Calu3 (cell line): ENCODE measurements at regions of chr12 and their contacts with region 1.

Region 1: GRCh38 chr12:6062757-6063735 is 61.4 kb downstream of the VWF start:
- DNase-seq: peak; percentile 76
- H3K4me3 Mint-ChIP-seq: no peak overlapping the region
- H3K27ac Mint-ChIP-seq: no peak overlapping the region
- H3K4me1 Mint-ChIP-seq: peaks cover 13% of the 10 kb centered on the region
- H3K27me3 Mint-ChIP-seq: peaks cover 21% of the 10 kb centered on the region
- CTCF ChIP-seq: peak; percentile 94

Region 2: GRCh38 chr12:6140651-6141447 is 77.8 kb after region 1 on chr12:
- CTCF ChIA-PET with region 1: no interaction called
- intact Hi-C with region 1: no loop called
- DNase-seq: no peak
- H3K4me3 Mint-ChIP-seq: no peak overlapping the region
- H3K27ac Mint-ChIP-seq: no peak overlapping the region
- H3K4me1 Mint-ChIP-seq: no peaks in the 10 kb centered on the region
- H3K27me3 Mint-ChIP-seq: peaks cover under 1% of the 10 kb centered on the region
- CTCF ChIP-seq: no peak

Region 3: DNA sequence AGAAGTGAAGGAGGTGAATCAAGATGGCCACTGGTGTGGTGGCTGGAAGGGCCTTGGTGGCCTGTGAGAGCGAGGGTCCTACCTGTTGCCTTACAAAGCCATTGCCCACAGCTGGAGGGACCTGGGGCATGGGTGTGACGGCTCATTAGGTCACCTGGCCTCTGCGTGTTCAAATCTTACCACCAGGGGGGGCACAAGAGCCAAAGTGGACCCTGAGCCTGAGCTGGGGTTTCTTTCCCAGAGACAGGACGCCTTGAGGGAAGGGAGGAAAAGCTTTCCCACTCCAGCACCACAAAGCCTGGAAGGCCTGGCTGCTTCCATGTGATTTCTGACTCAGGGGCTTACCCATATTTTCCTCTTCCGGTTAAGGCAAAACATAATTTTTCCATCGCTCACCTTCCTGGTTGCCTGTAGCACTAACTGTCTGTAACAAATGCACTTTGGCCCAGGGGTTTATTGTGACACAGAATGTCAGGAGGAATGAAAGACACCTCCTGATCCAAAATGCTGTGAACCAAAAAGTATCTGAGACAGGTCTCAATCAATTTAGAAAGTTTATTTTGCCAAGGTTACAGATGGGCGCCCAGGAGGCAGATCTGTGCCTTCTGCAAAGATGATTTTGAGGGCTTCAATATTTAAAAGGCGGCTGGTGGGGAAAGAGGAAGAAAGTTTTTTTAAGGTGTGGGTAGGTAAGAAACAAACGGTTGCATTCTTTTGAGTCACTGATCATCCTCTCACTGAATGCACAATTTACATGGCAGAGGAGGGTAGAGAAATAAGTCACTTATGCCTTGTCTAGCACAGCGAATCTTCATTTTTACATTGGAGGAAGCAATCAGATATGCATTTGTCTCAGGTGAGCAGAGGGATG is 132.9 kb after region 1 on chr12:
- CTCF ChIA-PET with region 1: interaction called, 6 read pairs
- intact Hi-C with region 1: loop called (anchors 1 kb)
- DNase-seq: peak; percentile 93
- H3K4me3 Mint-ChIP-seq: no peak overlapping the region
- H3K27ac Mint-ChIP-seq: peak overlapping the region; percentile 14
- H3K4me1 Mint-ChIP-seq: peaks cover 33% of the 10 kb centered on the region
- H3K27me3 Mint-ChIP-seq: peaks cover 18% of the 10 kb centered on the region
- CTCF ChIP-seq: peak; percentile 92